Natural killer cell (primary cell): ENCODE measurements at regions of chr6 and their contacts with region 1.

Region 1: GRCh38 chr6:154247119-154247861 is 109.3 kb downstream of the IPCEF1 start:
- DNase-seq: peak in 1 of 2 donors; percentile 70
- ATAC-seq: peak; percentile 70 to 79 (median 78)
- H3K4me3 ChIP-seq: peak overlapping the region; percentile 67
- H3K4me3 Mint-ChIP-seq: peak overlapping the region; percentile 95
- H3K27ac ChIP-seq: peak overlapping the region; percentile 85
- H3K27ac Mint-ChIP-seq: peak overlapping the region; percentile 89 to 93
- H3K4me1 ChIP-seq: peaks cover 38% of the 10 kb centered on the region
- H3K4me1 Mint-ChIP-seq: peaks cover 83 to 87% of the 10 kb centered on the region in 2 donors
- H3K27me3 ChIP-seq: no peaks in the 10 kb centered on the region
- H3K27me3 Mint-ChIP-seq: no peaks in the 10 kb centered on the region
- CTCF ChIP-seq: no peak

Region 2: DNA sequence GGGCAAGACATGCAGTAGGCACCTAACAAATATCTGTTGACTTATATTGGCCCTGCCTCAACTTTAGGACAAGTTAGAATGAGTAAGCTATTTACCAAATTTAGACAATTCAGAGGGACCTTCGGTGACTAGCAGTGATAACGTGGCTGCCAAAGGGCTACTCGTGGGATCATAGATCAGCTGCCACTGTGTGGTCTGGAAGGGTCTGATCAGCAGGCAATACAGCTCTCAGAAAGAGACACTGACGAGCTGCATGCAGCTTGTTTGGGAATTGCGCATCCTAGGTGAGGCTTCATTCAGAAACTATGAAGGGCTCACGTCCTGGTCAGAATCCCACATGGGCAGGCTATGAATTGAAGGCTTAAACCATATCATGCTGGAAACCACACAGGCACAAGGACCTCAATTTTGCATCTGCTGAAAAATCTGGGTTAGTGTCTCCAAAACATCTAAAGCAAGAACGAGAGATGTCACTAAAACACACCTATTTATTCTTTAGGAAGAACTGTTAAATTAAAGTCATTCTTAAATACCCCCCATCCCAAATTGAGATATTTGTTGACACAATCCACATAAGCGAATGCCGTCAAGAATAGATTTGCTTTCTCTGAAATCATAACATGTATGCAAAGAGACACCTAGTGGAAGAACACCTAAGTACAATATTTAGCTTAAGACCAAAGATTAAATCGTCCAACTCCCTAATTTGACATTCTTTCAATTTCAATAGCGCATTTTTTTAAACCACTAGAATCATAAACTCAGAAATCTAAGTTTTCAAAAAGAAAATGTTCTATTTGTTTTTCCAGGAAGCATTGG is 29.7 kb after region 1 on chr6:
- intact Hi-C with region 1: loop called (anchors 1 kb)
- DNase-seq: peak in 1 of 2 donors; percentile 79
- ATAC-seq: peak; percentile 70 to 92 (median 86)
- H3K4me3 ChIP-seq: peak overlapping the region; percentile 17
- H3K4me3 Mint-ChIP-seq: peak overlapping the region; percentile 80
- H3K27ac ChIP-seq: no peak overlapping the region
- H3K27ac Mint-ChIP-seq: peak overlapping the region in 1 of 2 donors; percentile 76
- H3K4me1 ChIP-seq: peaks cover 8% of the 10 kb centered on the region
- H3K4me1 Mint-ChIP-seq: peaks cover 15 to 16% of the 10 kb centered on the region in 2 donors
- H3K27me3 ChIP-seq: no peaks in the 10 kb centered on the region
- H3K27me3 Mint-ChIP-seq: no peaks in the 10 kb centered on the region
- CTCF ChIP-seq: peak; percentile 80

Region 3: DNA sequence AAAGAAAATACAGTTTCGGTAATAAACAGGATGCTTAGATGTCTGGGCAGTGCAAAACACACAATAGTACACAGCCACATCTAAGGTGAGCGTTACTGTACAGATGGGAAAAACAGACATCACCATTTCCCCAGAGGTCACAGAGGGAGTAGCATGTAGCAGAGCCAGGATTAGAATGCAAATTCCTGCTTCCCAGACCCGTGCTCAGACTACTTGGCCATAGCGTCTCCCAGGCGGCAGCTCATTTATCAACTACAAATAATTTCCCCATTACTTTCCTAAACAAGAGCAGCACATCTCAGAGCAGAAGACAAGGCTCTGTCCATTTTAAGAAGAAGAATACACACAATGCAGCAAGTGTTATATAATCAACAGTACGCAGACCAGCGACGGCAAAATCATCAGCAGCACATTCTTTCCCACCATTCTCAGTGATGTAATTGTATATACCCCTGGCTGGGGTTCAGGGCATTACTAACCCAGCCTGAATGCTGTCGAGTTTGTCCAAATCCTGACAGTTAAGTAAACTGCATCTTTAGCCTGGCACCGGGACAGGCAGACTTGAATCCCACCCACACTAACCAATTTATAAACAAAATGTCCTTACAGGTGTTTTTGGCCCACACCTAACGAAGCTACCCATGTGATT is 201.3 kb after region 1 on chr6:
- intact Hi-C with region 1: no loop called
- DNase-seq: no peak
- ATAC-seq: no peak
- H3K4me3 ChIP-seq: no peak overlapping the region
- H3K4me3 Mint-ChIP-seq: no peak overlapping the region
- H3K27ac ChIP-seq: no peak overlapping the region
- H3K27ac Mint-ChIP-seq: no peak overlapping the region
- H3K4me1 ChIP-seq: no peaks in the 10 kb centered on the region
- H3K4me1 Mint-ChIP-seq: no peaks in the 10 kb centered on the region
- H3K27me3 ChIP-seq: no peaks in the 10 kb centered on the region
- H3K27me3 Mint-ChIP-seq: no peaks in the 10 kb centered on the region
- CTCF ChIP-seq: no peak